ENCODE measurements at regions of chr12 and their contacts with region 1.

Region 1: DNA sequence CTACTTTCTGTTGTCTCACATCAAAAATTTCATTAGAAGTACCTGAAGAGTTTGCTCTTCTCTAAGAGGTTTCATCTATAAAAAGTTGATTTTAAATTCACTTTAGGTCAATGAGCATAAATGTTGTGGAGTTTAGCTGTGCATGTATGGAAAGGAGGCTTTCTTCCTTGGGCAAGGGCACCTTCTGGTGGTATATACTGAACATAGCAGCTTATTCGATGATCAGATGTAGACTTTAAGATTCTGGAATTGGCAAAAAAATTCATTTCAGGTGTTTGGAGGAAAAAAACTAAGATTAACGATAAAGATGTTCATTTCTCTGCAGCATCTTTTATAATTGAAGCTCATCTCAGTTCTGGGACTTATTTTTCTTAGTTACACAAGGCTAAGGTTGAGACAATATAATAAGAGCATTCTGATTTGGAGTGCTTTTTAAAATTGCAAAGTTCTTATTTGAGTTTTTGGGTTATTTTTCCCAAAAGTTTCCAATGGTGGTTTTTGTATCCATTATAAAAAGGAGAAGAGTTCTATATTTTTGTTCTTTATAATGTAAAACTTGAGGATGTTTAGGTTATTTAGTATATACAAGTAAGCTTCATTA is 46.8 kb downstream of the TMEM117 start:
- DNase-seq: peak in 1 of 2 experiments; percentile 63
- H3K4me3 ChIP-seq: no peak overlapping the region
- H3K4me3 Mint-ChIP-seq: no peak overlapping the region
- H3K27ac Mint-ChIP-seq: no peak overlapping the region
- H3K4me1 ChIP-seq: no peaks in the 10 kb centered on the region
- H3K4me1 Mint-ChIP-seq: peaks cover 19% of the 10 kb centered on the region
- H3K27me3 ChIP-seq: no peaks in the 10 kb centered on the region
- H3K27me3 Mint-ChIP-seq: no peaks in the 10 kb centered on the region
- CTCF ChIP-seq: peak; percentile 83 to 89

Region 2: DNA sequence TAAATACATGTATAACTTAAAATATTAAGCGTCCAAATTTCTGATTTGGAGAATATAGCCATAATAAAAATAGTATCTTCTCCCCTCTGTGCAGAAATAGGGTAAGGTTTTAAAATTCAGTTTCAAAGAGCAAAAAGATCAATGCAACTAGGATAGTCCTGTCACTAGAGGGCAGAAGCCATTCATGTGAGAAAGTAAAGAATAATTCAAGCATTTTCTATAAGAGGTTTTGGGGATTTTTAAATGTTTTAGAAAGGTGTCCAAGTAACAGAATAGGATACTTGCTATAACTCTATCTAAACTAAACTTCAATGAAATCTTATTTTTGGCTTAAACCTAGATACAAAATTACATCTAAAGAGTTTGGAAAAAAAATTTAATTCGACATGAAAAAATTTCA is 381.0 kb before region 1 on chr12:
- CTCF ChIA-PET with region 1: no interaction called
- POLR2A ChIA-PET with region 1: no interaction called
- intact Hi-C with region 1: loop called (anchors 2 kb)
- DNase-seq: peak in 1 of 2 experiments; percentile 12
- H3K4me3 ChIP-seq: no peak overlapping the region
- H3K4me3 Mint-ChIP-seq: no peak overlapping the region
- H3K27ac Mint-ChIP-seq: no peak overlapping the region
- H3K4me1 ChIP-seq: no peaks in the 10 kb centered on the region
- H3K4me1 Mint-ChIP-seq: no peaks in the 10 kb centered on the region
- H3K27me3 ChIP-seq: no peaks in the 10 kb centered on the region
- H3K27me3 Mint-ChIP-seq: peaks cover 2% of the 10 kb centered on the region
- CTCF ChIP-seq: peak; percentile 42 to 60

Region 3: GRCh38 chr12:43776498-43776897 is 106.2 kb before region 1 on chr12:
- CTCF ChIA-PET with region 1: interaction called, 73 read pairs
- POLR2A ChIA-PET with region 1: interaction called, 5 read pairs
- intact Hi-C with region 1: loop called (anchors 1 kb)
- DNase-seq: peak in 1 of 2 experiments; percentile 59
- H3K4me3 ChIP-seq: no peak overlapping the region
- H3K4me3 Mint-ChIP-seq: no peak overlapping the region
- H3K27ac Mint-ChIP-seq: no peak overlapping the region
- H3K4me1 ChIP-seq: no peaks in the 10 kb centered on the region
- H3K4me1 Mint-ChIP-seq: no peaks in the 10 kb centered on the region
- H3K27me3 ChIP-seq: no peaks in the 10 kb centered on the region
- H3K27me3 Mint-ChIP-seq: no peaks in the 10 kb centered on the region
- CTCF ChIP-seq: peak; percentile 69 to 83

Region 4: GRCh38 chr12:43835656-43836474 is 46.8 kb before region 1 on chr12 and contains the start of gene TMEM117:
- CTCF ChIA-PET with region 1: interaction called, 4 read pairs
- POLR2A ChIA-PET with region 1: interaction called, 4 read pairs
- intact Hi-C with region 1: loop called (anchors 1 kb)
- DNase-seq: peak; percentile 75 to 80
- H3K4me3 ChIP-seq: peak within 1 kb of the TSS; percentile 59
- H3K4me3 Mint-ChIP-seq: peak within 1 kb of the TSS; percentile 81
- H3K27ac Mint-ChIP-seq: peak within 1 kb of the TSS; percentile 87
- H3K4me1 ChIP-seq: peaks cover 28% of the 10 kb centered on the region
- H3K4me1 Mint-ChIP-seq: peaks cover 31% of the 10 kb centered on the region
- H3K27me3 ChIP-seq: no peaks in the 10 kb centered on the region
- H3K27me3 Mint-ChIP-seq: no peaks in the 10 kb centered on the region
- CTCF ChIP-seq: no peak
- total RNA-seq, gene TMEM117: 28.0 and 34.1 TPM in 2 replicates

Measured in Caco-2 (cell line).